ENCODE measurements at regions of chr16 and their contacts with region 1.

Region 1: GRCh38 chr16:66859397-66860068 is 15.3 kb downstream of the CA7 start:
- DNase-seq: no peak
- H3K4me3 ChIP-seq: no peak overlapping the region
- H3K27ac ChIP-seq: peak overlapping the region in 2 of 3 donors; percentile 30 to 51
- H3K4me1 ChIP-seq: peaks cover 13 to 16% of the 10 kb centered on the region in 2 donors
- H3K27me3 ChIP-seq: no peaks in the 10 kb centered on the region
- CTCF ChIP-seq: no peak
- POLR2A ChIP-seq: no peak

Region 2: GRCh38 chr16:66416939-66417700 is 442.4 kb before region 1 on chr16:
- intact Hi-C with region 1: loop called (anchors 10 kb)
- DNase-seq: no peak
- H3K4me3 ChIP-seq: no peak overlapping the region
- H3K27ac ChIP-seq: no peak overlapping the region
- H3K4me1 ChIP-seq: no peaks in the 10 kb centered on the region
- H3K27me3 ChIP-seq: no peaks in the 10 kb centered on the region
- CTCF ChIP-seq: no peak
- POLR2A ChIP-seq: no peak

Region 3: GRCh38 chr16:66735891-66736290 is 123.6 kb before region 1 on chr16:
- intact Hi-C with region 1: loop called (anchors 10 kb)
- DNase-seq: no peak
- H3K4me3 ChIP-seq: no peak overlapping the region
- H3K27ac ChIP-seq: no peak overlapping the region
- H3K4me1 ChIP-seq: peaks cover 11 to 30% of the 10 kb centered on the region in 2 donors
- H3K27me3 ChIP-seq: no peaks in the 10 kb centered on the region
- CTCF ChIP-seq: no peak
- POLR2A ChIP-seq: no peak

Measured in thyroid gland (tissue), 4 donors.